Ascending aorta (tissue), 2 donors: ENCODE measurements at regions of chr11 and their contacts with region 1.

Region 1: DNA sequence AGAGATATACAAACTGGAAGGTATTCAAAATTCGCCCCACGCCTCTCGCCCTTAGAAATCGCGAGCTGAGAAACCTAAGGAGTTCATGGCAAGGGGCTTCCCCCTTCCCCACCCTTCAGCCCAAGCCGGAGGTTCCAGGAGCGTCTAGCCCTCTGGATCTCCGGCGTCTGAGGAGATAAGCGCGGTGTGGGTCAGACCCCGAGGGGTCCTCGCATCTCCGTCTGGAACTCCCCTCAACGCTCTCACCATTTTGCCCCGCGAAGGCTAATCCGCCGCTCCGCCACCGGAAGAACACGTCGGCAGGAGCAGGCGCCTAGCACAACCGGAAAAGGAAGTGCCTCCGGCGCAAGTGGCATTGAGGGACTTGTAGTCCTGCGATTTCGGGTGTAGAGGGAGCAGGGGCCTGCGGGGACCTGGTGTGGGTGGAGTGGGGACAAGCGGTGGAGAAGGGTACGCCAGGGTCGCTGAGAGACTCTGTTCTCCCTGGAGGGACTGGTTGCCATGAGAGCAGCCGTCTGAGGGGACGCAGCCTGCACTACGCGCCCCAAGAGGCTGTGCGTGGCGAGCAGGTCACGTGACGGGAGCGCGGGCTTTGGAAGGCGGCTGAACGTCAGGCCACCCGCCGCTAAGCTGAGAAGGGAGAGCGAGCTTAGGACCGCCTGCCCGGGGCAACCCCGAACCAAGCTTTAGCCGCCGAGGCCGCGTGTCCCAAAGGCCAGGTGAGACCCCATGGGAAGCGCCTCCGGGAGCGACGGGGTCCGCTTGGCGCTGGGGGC is at the starts of genes FEN1 and TMEM258:
- DNase-seq: peak; percentile 60 to 93
- H3K4me3 ChIP-seq: peak within 1 kb of the TSS; percentile 79 to 99
- H3K27ac ChIP-seq: peak within 1 kb of the TSS; percentile 87 to 97
- H3K4me1 ChIP-seq: peaks cover 5 to 19% of the 10 kb centered on the region in 2 donors
- H3K27me3 ChIP-seq: no peaks in the 10 kb centered on the region
- CTCF ChIP-seq: peak in 2 of 3 experiments; percentile 20 to 22
- total RNA-seq, gene FEN1: 1.5 TPM
- total RNA-seq, gene TMEM258: 26.4 TPM

Region 2: DNA sequence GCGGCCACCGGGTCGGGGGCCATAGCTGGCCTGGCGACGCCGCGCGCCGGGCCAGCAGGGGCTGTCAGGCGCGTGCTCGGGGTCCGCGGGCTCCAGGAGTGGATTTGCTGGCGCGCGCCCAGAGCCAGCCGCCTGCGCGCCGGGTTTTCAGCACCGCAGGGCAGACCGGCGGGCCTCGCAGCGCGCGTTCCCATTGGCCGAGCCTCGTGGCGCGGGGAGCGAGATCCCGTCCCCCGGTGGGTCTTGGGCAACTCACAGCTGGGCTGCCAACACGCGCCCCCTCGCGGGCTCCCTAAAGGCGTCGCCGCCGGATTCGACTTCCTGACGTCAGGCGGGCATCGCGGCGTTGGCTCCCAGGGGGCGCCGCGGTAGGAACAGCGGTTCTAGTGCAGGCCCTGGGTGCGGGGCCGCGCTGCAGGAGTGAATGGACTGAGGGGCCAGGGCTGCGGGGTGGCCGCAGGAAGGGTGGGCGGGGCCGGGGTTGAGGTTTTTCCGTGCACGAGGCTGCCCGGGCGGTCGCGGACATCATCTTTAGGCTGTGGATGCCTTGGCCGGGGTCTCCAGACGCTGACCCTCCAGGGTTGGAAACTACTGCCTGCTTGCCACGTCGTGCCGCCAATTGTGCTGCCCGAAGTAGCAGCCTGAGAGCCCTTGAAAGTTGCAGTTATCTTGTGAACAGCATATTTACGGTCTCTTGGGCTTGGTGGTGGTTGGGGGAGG is 24.4 kb after region 1 on chr11 and contains the start of gene FADS1:
- intact Hi-C with region 1: loop called (anchors 1 kb)
- DNase-seq: peak; percentile 78 to 98
- H3K4me3 ChIP-seq: peak within 1 kb of the TSS; percentile 85 to 86
- H3K27ac ChIP-seq: peak within 1 kb of the TSS; percentile 99
- H3K4me1 ChIP-seq: peaks cover 0 to 9% of the 10 kb centered on the region in 2 donors
- H3K27me3 ChIP-seq: no peaks in the 10 kb centered on the region
- CTCF ChIP-seq: peak; percentile 55 to 74 (median 58)
- total RNA-seq, gene FADS1: 47.1 TPM

Region 3: DNA sequence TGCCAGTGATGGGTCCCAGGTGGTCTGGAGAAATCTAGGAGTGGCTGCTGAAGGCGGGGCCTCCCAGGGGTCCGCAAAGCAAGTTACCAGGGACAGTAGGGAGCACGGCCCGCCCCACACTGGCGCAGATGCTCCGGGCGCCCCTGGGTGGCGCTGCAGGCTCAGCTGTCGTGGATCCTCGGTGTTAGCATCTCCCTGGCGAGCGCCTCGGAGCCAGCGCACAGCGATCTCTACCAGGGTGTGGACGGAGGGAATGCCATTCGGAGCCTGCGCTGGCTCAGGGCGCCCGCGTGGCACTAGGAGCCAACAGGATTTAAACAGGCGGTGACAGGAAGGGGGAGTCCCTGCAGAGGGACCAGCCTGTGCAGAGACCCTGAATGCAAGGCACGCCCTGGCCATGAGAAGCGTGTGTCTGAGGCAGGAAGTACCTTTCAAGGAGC is 78.7 kb after region 1 on chr11:
- intact Hi-C with region 1: loop called (anchors 5 kb)
- DNase-seq: peak in 1 of 2 donors; percentile 90
- H3K4me3 ChIP-seq: peak overlapping the region in 1 of 2 donors; percentile 8
- H3K27ac ChIP-seq: peak overlapping the region; percentile 70 to 74
- H3K4me1 ChIP-seq: peaks cover 0 to 13% of the 10 kb centered on the region in 2 donors
- H3K27me3 ChIP-seq: no peaks in the 10 kb centered on the region
- CTCF ChIP-seq: peak; percentile 94 to 98 (median 97)

Region 4: DNA sequence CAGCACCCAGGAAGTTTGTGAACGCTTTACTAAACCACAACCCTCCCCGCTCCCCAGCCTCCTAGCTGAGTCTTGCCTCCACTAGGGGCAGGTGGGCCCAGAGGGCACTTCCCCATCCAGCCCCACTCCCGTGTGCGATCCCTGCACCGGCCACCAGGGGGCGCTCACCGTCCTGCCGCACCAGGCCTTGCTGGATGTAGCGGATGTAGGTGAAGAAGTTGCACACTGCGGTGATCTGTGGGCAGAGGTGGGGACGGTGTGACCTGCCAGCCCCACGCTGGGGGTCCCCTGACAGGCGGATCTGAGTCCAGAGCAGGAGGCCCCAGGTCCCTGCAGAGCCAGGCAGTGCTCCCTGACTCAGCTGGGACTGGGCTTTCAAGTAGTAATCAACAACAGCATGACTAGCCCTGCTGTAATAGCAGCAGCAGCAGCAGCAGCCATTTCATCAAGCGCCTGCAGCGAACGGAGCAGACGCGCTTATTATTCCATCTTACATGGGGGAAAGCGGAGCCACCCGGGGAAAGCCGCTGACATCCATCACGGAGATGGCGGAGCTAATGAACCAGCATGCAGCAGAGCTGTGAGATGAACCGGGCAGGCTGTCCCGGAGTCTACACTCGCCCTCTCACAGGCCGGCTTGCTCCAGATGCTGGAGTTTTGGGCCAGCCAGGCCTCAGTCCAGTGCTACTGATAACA is 106.8 kb after region 1 on chr11:
- intact Hi-C with region 1: loop called (anchors 2 kb)
- DNase-seq: peak in 1 of 2 donors; percentile 91
- H3K4me3 ChIP-seq: no peak overlapping the region
- H3K27ac ChIP-seq: peak overlapping the region in 1 of 2 donors; percentile 30
- H3K4me1 ChIP-seq: no peaks in the 10 kb centered on the region
- H3K27me3 ChIP-seq: no peaks in the 10 kb centered on the region
- CTCF ChIP-seq: peak; percentile 99 to 100 (median 99)

Region 5: DNA sequence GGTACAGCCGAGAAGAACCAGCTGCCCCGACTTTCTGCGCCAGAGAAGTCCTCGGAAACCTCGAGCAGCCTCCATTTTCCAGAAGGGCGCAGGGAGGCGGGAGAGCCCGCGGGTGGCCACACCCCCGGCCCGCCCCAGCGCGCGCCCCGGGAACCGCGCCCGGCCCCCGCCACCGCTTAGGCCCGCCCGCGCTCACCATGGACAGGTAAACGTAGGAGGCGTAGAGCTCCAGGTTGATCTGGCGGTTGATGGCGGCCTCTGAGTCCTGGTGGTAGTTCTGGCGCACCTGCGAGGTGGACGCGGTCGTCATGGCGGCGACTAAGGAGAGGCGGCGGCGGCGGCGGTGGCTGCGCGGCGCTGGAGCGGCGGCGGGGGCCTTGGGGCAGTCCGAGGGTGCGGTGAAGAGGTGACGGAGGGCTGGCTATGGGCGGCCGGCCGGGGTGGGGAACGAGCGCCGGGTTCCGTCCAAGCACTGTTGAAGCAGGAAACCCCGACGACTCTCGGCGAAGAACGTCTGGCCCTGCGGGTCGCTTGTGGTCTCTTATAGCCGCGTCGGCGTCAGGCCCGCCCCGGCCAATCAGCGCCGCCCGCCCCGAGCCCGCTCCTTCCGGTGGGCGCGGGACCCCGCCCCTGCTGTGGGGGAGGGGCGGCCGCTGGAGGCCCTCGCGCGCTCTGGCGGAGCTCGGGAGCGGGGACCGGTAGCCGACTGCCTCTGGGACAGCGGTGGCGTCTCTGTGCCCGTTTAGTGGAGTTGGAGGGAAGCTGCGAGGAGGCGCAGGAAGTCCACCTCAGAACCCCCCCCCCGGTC is 174.8 kb after region 1 on chr11 and contains the start of gene FTH1:
- intact Hi-C with region 1: loop called (anchors 5 kb)
- DNase-seq: peak; percentile 61 to 94
- H3K4me3 ChIP-seq: peak within 1 kb of the TSS; percentile 88 to 96
- H3K27ac ChIP-seq: peak within 1 kb of the TSS; percentile 98 to 99
- H3K4me1 ChIP-seq: peaks cover 23 to 46% of the 10 kb centered on the region in 2 donors
- H3K27me3 ChIP-seq: no peaks in the 10 kb centered on the region
- CTCF ChIP-seq: no peak
- total RNA-seq, gene FTH1: 2,353 TPM

Region 6: DNA sequence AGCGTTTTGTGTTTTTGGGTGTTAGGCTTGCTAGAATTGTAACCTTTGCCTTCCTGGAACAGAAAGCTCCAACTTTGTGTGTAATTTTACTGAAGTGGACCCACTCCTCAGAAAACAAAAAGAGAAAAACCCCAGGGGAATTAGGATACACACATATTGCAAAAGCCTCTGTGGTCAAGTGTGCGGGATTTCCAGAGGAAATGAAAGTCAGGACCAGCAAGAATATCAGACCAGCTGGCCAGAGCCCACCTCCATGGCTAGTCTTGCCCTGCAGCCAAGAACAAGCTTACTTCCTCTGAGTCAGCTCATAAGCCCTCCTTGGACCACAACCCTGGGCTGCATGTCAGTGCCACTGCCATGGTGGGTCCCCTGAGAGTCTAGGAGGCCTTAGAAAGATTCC is 212.0 kb after region 1 on chr11:
- intact Hi-C with region 1: no loop called
- DNase-seq: peak; percentile 59 to 91
- H3K4me3 ChIP-seq: no peak overlapping the region
- H3K27ac ChIP-seq: peak overlapping the region; percentile 75 to 78
- H3K4me1 ChIP-seq: peaks cover 0 to 10% of the 10 kb centered on the region in 2 donors
- H3K27me3 ChIP-seq: no peaks in the 10 kb centered on the region
- CTCF ChIP-seq: no peak

Region 7: GRCh38 chr11:62069986-62070919 is 277.8 kb after region 1 on chr11:
- intact Hi-C with region 1: no loop called
- DNase-seq: peak in 1 of 2 donors; percentile 45
- H3K4me3 ChIP-seq: no peak overlapping the region
- H3K27ac ChIP-seq: no peak overlapping the region
- H3K4me1 ChIP-seq: no peaks in the 10 kb centered on the region
- H3K27me3 ChIP-seq: no peaks in the 10 kb centered on the region
- CTCF ChIP-seq: no peak

Region 8: GRCh38 chr11:62108017-62108750 is 315.7 kb after region 1 on chr11:
- intact Hi-C with region 1: loop called (anchors 2 kb)
- DNase-seq: no peak
- H3K4me3 ChIP-seq: no peak overlapping the region
- H3K27ac ChIP-seq: no peak overlapping the region
- H3K4me1 ChIP-seq: peaks cover 13 to 34% of the 10 kb centered on the region in 2 donors
- H3K27me3 ChIP-seq: no peaks in the 10 kb centered on the region
- CTCF ChIP-seq: peak; percentile 82

Region 9: DNA sequence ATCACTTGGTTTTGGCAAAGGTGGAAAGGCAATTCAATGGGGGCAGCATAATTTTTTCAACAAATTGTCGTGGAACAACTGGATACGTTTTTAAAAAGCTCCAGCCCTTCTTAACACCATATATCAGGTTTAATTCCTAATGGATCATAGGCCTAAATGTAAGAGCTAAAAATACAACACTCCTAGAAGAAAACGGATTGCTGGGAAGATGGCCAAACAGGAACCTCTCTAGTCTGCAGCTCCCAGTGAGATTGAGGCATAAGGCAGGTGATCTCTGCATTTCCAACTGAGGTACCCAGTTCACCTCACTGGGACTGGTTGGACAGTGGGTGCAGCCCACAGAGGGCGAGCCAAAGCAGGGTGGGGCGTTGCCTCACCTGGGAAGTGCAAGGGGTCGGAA is 365.1 kb after region 1 on chr11:
- intact Hi-C with region 1: no loop called
- DNase-seq: no peak
- H3K4me3 ChIP-seq: no peak overlapping the region
- H3K27ac ChIP-seq: no peak overlapping the region
- H3K4me1 ChIP-seq: no peaks in the 10 kb centered on the region
- H3K27me3 ChIP-seq: no peaks in the 10 kb centered on the region
- CTCF ChIP-seq: no peak

Region 10: DNA sequence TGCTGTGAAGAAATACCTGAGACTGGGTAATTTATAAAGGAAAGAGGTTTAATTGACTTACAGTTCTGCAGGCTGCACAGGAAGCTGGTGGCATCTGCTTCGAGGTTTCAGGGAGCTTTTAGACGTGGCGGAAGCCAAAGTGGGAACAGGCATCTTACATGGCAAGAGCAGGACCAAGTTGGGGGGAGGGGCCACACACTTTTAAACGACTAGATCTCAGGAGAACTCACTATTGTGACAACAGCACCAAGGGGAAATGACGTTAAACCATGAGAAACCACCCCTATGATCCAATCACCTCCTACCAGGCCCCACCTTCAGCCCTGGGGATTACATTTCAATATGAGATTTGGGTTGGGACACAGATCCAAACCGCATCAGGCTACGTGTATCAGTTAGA is 517.5 kb after region 1 on chr11:
- intact Hi-C with region 1: loop called (anchors 5 kb)
- DNase-seq: no peak
- H3K4me3 ChIP-seq: no peak overlapping the region
- H3K27ac ChIP-seq: no peak overlapping the region
- H3K4me1 ChIP-seq: no peaks in the 10 kb centered on the region
- H3K27me3 ChIP-seq: no peaks in the 10 kb centered on the region
- CTCF ChIP-seq: no peak